AG04449 (cell line): ENCODE measurements at regions of chr4 and their contacts with region 1.

Region 1: GRCh38 chr4:5791654-5792053 is 80.7 kb downstream of the EVC start:
- DNase-seq: no peak
- H3K4me3 ChIP-seq: no peak overlapping the region
- CTCF ChIP-seq: no peak

Region 2: GRCh38 chr4:5611750-5612149 is 179.9 kb before region 1 on chr4:
- CTCF ChIA-PET with region 1: no interaction called
- POLR2A ChIA-PET with region 1: no interaction called
- DNase-seq: no peak
- H3K4me3 ChIP-seq: no peak overlapping the region
- CTCF ChIP-seq: no peak

Region 3: DNA sequence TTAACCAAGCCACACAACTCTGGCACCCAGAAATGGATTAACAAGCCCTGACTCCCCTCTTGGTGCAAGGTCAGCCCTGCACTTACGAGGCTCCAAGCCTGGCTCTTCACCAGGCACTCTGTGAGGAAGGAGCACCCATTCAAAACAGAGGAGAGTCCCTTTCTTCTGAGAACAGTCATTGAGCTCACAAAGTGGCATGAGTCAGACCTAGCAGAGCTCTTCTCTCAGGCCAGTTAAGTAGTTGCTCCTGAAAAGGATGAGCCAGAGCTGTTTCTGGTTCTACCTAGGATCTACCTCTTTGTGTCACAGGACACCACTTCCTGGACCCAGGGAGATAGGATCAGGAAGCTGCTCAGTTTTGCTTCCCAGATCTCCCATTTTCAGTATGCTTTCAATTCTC is 131.5 kb before region 1 on chr4:
- CTCF ChIA-PET with region 1: interaction called, 10 read pairs
- POLR2A ChIA-PET with region 1: no interaction called
- DNase-seq: no peak
- H3K4me3 ChIP-seq: no peak overlapping the region
- CTCF ChIP-seq: no peak

Region 4: GRCh38 chr4:5708449-5709206 is 83.0 kb before region 1 on chr4 and contains the start of gene EVC2:
- CTCF ChIA-PET with region 1: interaction called, 18 read pairs
- POLR2A ChIA-PET with region 1: no interaction called
- DNase-seq: no peak
- H3K4me3 ChIP-seq: peak within 1 kb of the TSS; percentile 65
- CTCF ChIP-seq: no peak

Region 5: GRCh38 chr4:5780831-5781480 is 10.7 kb before region 1 on chr4:
- CTCF ChIA-PET with region 1: interaction called, 18 read pairs
- POLR2A ChIA-PET with region 1: no interaction called
- DNase-seq: peak; percentile 80
- H3K4me3 ChIP-seq: no peak overlapping the region
- CTCF ChIP-seq: no peak

Region 6: DNA sequence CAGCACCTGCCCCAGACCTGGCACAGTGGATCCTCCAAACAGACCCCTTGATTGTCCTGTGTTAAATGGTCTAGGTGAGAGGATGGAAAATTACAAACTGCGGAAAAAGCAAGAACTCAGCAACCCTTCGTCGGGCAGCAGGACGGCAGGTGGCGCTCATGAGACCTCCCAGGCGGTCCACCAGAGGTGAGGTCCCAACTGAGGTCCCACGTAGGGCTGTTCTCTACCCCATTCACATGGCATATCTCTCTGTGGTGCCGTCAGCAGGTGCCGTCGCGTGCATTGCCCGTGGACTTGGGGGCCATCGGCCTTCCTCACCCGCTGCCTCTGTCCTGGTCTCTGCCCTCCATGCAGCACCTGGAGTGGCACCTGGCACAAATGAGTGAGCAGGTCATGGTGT is 13.0 kb after region 1 on chr4:
- CTCF ChIA-PET with region 1: interaction called, 11 read pairs
- POLR2A ChIA-PET with region 1: no interaction called
- DNase-seq: no peak
- H3K4me3 ChIP-seq: no peak overlapping the region
- CTCF ChIP-seq: no peak

Region 7: GRCh38 chr4:5812506-5813229 is 21.0 kb after region 1 on chr4:
- CTCF ChIA-PET with region 1: interaction called, 11 read pairs
- POLR2A ChIA-PET with region 1: no interaction called
- DNase-seq: peak; percentile 24
- H3K4me3 ChIP-seq: no peak overlapping the region
- CTCF ChIP-seq: peak; percentile 62